Heart right ventricle (tissue), 16 donors: ENCODE measurements at regions of chr7 and their contacts with region 1.

Region 1: DNA sequence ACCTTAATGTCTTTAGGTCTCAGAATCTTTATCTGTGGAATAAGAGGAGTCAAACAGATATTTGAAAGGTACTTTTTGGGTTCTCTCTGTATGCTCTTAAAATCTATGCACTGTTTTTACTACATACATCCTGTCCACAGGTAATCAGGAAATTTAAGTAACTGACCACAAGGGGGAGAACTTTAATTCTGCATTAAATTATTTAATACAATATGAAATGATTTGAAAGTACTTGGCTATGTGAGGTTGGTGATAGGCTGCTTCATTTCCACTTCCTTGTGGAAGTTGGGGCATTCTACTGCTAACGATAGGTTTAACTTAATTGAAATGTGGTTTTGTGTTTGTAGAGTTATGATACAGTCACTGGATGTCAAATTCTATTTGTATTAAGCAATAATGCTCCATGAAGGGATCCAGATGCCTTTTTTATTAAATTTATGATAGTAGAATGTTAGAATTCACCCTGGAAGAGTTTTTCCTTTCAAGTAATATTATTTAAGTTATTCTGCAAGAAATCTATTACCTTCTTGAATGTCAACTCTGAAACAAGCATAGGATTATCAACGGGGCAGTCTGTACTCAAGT is 6.0 kb downstream of the TEX47 start:
- DNase-seq: no peak
- ATAC-seq: no peak
- H3K4me3 ChIP-seq: no peak overlapping the region
- H3K27ac ChIP-seq: no peak overlapping the region
- H3K4me1 ChIP-seq: no peaks in the 10 kb centered on the region
- H3K27me3 ChIP-seq: no peaks in the 10 kb centered on the region
- CTCF ChIP-seq: peak; percentile 13 to 58 (median 50)

Region 2: GRCh38 chr7:88725754-88726153 is 63.8 kb before region 1 on chr7:
- intact Hi-C with region 1: loop called in 1 of 10 experiments (anchors 10 kb)
- DNase-seq: no peak
- ATAC-seq: no peak
- H3K4me3 ChIP-seq: no peak overlapping the region
- H3K27ac ChIP-seq: no peak overlapping the region
- H3K4me1 ChIP-seq: no peaks in the 10 kb centered on the region
- H3K27me3 ChIP-seq: no peaks in the 10 kb centered on the region
- CTCF ChIP-seq: no peak

Region 3: GRCh38 chr7:89073776-89074175 is 284.2 kb after region 1 on chr7:
- intact Hi-C with region 1: no loop called
- DNase-seq: no peak
- ATAC-seq: no peak
- H3K4me3 ChIP-seq: no peak overlapping the region
- H3K27ac ChIP-seq: no peak overlapping the region
- H3K4me1 ChIP-seq: no peaks in the 10 kb centered on the region
- H3K27me3 ChIP-seq: no peaks in the 10 kb centered on the region
- CTCF ChIP-seq: no peak